OCI-LY7 (cell line): ENCODE measurements at regions of chr17 and their contacts with region 1.

Region 1: DNA sequence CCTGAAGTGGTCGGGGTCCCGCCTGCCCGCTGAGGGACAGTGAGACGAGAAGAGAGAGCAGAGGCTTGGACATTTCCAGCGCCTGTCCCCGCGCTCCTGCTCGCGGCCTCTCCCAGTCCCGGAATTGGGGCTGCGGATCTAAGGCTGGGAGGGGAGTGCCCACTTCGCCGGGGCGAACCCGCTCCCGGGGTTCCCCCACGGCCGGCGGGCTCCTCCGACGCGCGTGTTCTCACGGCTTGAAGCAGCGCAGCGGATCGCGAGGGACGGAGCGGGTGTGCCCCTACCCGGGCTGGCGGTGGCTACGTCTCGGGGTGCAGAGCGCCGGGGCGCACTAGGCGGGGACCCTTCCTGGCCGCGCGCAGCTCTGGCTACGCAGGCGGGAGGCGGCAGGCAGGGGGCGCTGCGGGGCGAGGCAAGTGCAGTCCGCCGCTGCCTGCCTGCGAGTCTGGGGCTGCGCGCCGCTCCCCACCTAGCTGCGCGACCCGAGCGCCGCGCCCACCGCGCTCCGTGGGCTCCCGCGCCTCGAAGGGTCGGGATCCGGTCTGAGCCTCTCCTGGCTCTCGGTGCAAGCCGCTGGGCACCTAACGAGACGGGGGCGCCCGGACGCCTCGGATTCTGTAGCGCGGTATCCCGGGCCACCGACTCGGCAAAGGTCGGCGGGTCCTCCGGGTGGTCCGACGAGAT is 1.2 kb downstream of the NGFR start:
- DNase-seq: peak; percentile 65
- H3K4me3 ChIP-seq: peak overlapping the region; percentile 68
- H3K27ac ChIP-seq: no peak overlapping the region
- H3K4me1 ChIP-seq: peaks cover 16% of the 10 kb centered on the region
- CTCF ChIP-seq: peak; percentile 75

Region 2: DNA sequence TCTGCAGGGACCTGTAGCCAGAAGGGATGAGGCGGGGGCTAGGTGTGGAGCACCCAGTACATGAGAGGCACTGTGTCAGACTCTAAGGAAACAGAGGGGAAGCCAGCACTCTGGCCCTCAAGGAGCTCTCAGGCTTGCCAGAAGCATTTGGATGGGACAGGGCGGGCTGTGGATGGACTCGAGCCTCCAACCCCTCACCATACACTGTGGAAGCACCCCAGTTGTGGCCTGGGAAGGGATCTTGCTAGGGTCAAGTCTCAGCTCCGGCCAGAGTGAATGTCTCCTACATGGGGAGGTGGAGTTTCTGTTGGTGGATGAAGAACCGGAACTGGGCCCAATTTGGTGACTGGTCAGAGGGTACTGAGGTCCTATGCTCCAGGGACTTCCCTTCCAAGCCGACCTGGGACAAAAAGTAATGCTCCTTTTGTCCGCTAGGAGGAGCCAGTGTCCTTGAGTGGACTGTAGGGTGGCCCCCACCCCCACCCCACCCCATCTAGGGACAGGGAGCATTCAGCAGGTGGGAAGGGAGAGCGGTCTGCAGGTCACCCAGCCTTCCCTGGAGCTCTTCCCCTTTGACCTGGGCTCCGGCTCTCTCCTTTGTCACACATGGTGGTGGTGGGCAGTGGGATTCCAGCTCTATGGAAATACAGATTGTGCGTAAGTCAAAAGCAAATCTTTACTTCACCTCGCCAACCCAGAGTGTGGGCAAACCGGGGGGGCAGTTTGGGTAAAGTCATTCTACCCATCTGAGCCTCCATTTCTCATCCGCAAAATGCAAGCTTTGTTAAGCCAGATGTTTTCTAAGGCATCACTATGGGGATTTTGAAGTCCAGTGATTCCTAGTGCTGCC is 61.3 kb before region 1 on chr17:
- CTCF ChIA-PET with region 1: no interaction called
- POLR2A ChIA-PET with region 1: no interaction called
- intact Hi-C with region 1: loop called (anchors 5 kb)
- DNase-seq: peak; percentile 63
- H3K4me3 ChIP-seq: no peak overlapping the region
- H3K27ac ChIP-seq: no peak overlapping the region
- H3K4me1 ChIP-seq: peaks cover 22% of the 10 kb centered on the region
- CTCF ChIP-seq: peak; percentile 83

Region 3: DNA sequence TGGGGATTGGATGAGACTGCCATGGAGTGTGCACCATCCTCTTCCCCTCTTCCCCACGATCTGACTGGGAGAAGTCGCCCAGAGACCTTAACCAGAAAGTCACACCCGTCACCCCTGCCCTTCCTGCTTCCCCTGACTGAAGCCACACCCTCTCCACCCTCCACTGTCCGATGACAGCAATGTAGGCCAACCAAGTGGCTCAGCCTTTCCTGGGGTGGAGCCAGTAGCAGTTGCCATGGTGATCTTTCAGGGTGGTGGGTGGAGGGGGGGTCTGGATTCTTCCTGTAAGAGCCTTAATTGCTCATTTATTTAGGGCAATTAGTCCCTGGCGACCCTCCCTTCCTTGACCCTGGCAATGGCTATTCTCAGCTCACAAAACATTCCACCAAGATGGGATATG is 44.1 kb before region 1 on chr17:
- CTCF ChIA-PET with region 1: no interaction called
- POLR2A ChIA-PET with region 1: interaction called, 10 read pairs
- intact Hi-C with region 1: no loop called
- DNase-seq: no peak
- H3K4me3 ChIP-seq: no peak overlapping the region
- H3K27ac ChIP-seq: no peak overlapping the region
- H3K4me1 ChIP-seq: peaks cover 10% of the 10 kb centered on the region
- CTCF ChIP-seq: no peak